Breast epithelium (tissue), 4 donors: ENCODE measurements at regions of chr9 and their contacts with region 1.

Region 1: GRCh38 chr9:34701769-34702736 is 7.9 kb downstream of the CCL21 start:
- DNase-seq: peak; percentile 79 to 86
- H3K4me3 ChIP-seq: peak overlapping the region; percentile 61 to 79 (median 69)
- H3K27ac ChIP-seq: peak overlapping the region; percentile 74 to 93
- H3K4me1 ChIP-seq: no peaks in the 10 kb centered on the region
- H3K27me3 ChIP-seq: no peaks in the 10 kb centered on the region
- CTCF ChIP-seq: peak; percentile 94 to 95 (median 95)
- POLR2A ChIP-seq: no peak

Region 2: GRCh38 chr9:34546834-34547827 is 154.9 kb before region 1 on chr9:
- intact Hi-C with region 1: loop called (anchors 5 kb)
- DNase-seq: no peak
- H3K4me3 ChIP-seq: no peak overlapping the region
- H3K27ac ChIP-seq: no peak overlapping the region
- H3K4me1 ChIP-seq: no peaks in the 10 kb centered on the region
- H3K27me3 ChIP-seq: no peaks in the 10 kb centered on the region
- CTCF ChIP-seq: peak; percentile 71 to 73 (median 72)
- POLR2A ChIP-seq: no peak

Region 3: GRCh38 chr9:34825775-34826174 is 123.7 kb after region 1 on chr9:
- intact Hi-C with region 1: loop called (anchors 5 kb)
- DNase-seq: no peak
- H3K4me3 ChIP-seq: no peak overlapping the region
- H3K27ac ChIP-seq: no peak overlapping the region
- H3K4me1 ChIP-seq: no peaks in the 10 kb centered on the region
- H3K27me3 ChIP-seq: no peaks in the 10 kb centered on the region
- CTCF ChIP-seq: no peak
- POLR2A ChIP-seq: no peak